Body of pancreas (tissue), 4 donors: ENCODE measurements at regions of chr9 and their contacts with region 1.

Region 1: GRCh38 chr9:24382566-24382965 is 163.1 kb downstream of the IZUMO3 start:
- DNase-seq: no peak
- ATAC-seq: no peak
- H3K4me3 ChIP-seq: no peak overlapping the region
- H3K27ac ChIP-seq: no peak overlapping the region
- H3K4me1 ChIP-seq: no peaks in the 10 kb centered on the region
- H3K27me3 ChIP-seq: no peaks in the 10 kb centered on the region
- CTCF ChIP-seq: no peak
- POLR2A ChIP-seq: no peak

Region 2: GRCh38 chr9:24451346-24451745 is 68.8 kb after region 1 on chr9:
- intact Hi-C with region 1: loop called (anchors 10 kb)
- DNase-seq: no peak
- ATAC-seq: no peak
- H3K4me3 ChIP-seq: no peak overlapping the region
- H3K27ac ChIP-seq: no peak overlapping the region
- H3K4me1 ChIP-seq: no peaks in the 10 kb centered on the region
- H3K27me3 ChIP-seq: no peaks in the 10 kb centered on the region
- CTCF ChIP-seq: no peak
- POLR2A ChIP-seq: no peak